Activated B cell treated with CpG ODN at 0.5 μM for 24 hours (primary cell): ENCODE measurements at regions of chr2 and their contacts with region 1.

Region 1: DNA sequence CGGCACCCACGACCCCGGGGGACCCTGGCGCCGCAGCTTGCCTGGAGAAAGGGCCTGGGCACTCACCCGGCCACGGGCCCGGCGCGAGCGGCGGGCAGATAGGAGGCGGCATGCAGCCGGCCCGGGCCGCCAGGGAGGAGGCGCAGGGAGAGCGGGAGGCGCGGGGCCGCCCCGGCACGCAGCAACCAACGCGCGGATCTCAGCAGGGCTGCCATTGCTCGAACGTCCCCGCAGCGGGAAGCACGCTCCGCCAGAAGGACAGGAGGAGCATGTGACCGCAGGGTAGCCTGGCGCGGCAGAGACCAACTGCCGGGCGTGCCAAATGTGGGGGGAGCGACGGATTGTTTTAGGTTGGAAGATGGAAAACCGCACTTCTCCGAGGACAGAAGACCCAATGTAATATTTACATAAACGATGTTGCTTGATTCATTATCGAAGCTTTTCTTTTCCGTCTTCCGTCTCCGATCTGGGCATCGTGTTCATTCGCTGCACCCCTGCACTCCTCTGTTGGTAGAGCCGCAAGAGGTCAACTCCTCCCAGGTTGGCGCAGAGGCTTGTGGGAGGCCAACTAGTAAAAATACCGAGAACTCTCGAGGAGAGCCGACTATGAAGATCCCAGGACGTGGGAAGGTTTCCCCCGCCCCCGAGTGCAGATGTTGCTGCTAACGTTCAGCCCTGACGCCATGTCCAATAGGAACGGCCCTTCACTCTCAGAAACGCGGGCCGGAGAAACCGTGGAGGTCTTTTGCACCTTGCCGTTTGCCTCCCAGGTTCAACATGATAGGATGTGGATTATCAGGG is at the start of gene LRPPRC:
- DNase-seq: peak; percentile 74
- ATAC-seq: peak; percentile 96
- H3K4me3 Mint-ChIP-seq: peak within 1 kb of the TSS; percentile 92
- H3K27ac Mint-ChIP-seq: peak within 1 kb of the TSS; percentile 98
- H3K4me1 Mint-ChIP-seq: peaks cover 49% of the 10 kb centered on the region
- H3K27me3 Mint-ChIP-seq: no peaks in the 10 kb centered on the region
- CTCF ChIP-seq: no peak
- total RNA-seq, gene LRPPRC: 114 and 120 TPM in 2 replicates

Region 2: GRCh38 chr2:42102024-42102590 is 1893.8 kb before region 1 on chr2:
- CTCF ChIA-PET with region 1: no interaction called
- POLR2A ChIA-PET with region 1: no interaction called
- intact Hi-C with region 1: loop called (anchors 10 kb)
- DNase-seq: peak; percentile 88
- ATAC-seq: peak; percentile 72
- H3K4me3 Mint-ChIP-seq: peak overlapping the region; percentile 88
- H3K27ac Mint-ChIP-seq: no peak overlapping the region
- H3K4me1 Mint-ChIP-seq: peaks cover 47% of the 10 kb centered on the region
- H3K27me3 Mint-ChIP-seq: no peaks in the 10 kb centered on the region
- CTCF ChIP-seq: no peak

Region 3: DNA sequence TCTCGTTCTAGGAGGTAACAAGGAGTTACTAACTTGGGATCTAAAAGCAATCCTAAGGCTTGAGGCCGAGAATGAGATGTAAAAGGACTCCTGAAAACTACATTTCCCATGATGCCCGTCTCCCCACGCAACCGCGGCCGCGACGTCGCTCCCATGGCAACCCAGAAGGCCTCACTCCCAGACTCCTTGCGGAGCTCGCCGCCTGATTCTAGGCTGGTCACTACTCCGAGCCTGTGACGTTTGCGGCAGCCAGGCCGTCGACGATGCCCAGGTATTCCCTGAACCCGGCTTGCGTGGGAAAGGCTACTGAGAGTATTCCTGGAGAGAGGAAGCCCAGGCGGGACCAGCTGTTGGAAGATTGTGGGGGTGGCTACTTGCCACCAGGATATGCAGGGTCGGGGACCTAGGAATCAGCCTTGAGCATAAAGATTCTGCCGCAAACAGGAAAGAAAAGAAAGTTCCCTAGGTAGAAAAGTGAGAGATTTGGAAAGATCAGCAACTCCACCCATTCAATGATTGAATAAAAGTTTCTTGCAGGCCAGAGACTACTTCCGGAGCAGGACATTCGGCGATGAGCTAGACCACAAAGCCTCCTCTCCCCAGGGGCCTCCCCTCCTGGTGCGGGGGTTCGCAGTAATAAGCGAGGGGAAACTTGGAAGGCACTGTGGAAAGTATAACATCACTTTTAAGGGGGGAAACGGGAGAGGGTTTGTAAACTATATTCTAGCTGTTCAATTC is 221.9 kb before region 1 on chr2 and contains the start of gene DYNC2LI1:
- CTCF ChIA-PET with region 1: no interaction called
- POLR2A ChIA-PET with region 1: no interaction called
- intact Hi-C with region 1: loop called (anchors 2 kb)
- DNase-seq: peak; percentile 75
- ATAC-seq: peak; percentile 98
- H3K4me3 Mint-ChIP-seq: peak within 1 kb of the TSS; percentile 100
- H3K27ac Mint-ChIP-seq: peak within 1 kb of the TSS; percentile 85
- H3K4me1 Mint-ChIP-seq: peaks cover 12% of the 10 kb centered on the region
- H3K27me3 Mint-ChIP-seq: peaks cover 4% of the 10 kb centered on the region
- CTCF ChIP-seq: no peak
- total RNA-seq, gene DYNC2LI1: 8.9 and 10.4 TPM in 2 replicates

Region 4: DNA sequence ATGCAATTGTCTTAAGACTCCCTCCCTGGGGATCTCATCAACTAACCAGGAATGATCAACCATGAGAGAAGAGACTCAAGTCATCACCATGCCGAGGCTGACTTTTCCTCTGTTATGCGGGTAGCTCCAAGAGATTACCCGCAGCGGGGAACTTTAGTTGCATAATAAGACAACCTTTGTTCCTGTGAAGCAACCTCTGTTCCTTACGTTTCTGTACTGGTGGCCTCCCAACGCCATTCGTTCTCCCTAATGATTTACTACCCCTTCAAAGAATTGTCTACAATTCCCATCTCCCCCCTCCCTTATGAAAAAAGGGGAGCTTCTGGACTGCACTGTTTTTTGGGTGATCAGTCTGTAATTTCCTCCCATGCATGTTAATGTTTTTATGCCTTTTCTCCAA is 65.9 kb after region 1 on chr2:
- CTCF ChIA-PET with region 1: no interaction called
- POLR2A ChIA-PET with region 1: no interaction called
- intact Hi-C with region 1: no loop called
- DNase-seq: no peak
- ATAC-seq: no peak
- H3K4me3 Mint-ChIP-seq: no peak overlapping the region
- H3K27ac Mint-ChIP-seq: no peak overlapping the region
- H3K4me1 Mint-ChIP-seq: no peaks in the 10 kb centered on the region
- H3K27me3 Mint-ChIP-seq: peaks cover 13% of the 10 kb centered on the region
- CTCF ChIP-seq: no peak

Region 5: GRCh38 chr2:44361330-44362206 is 365.6 kb after region 1 on chr2 and contains the starts of genes CAMKMT and PREPL:
- CTCF ChIA-PET with region 1: no interaction called
- POLR2A ChIA-PET with region 1: interaction called, 15 read pairs
- intact Hi-C with region 1: loop called (anchors 1 kb)
- DNase-seq: peak; percentile 96
- ATAC-seq: peak; percentile 83
- H3K4me3 Mint-ChIP-seq: peak within 1 kb of the TSS; percentile 93
- H3K27ac Mint-ChIP-seq: peak within 1 kb of the TSS; percentile 100
- H3K4me1 Mint-ChIP-seq: peaks cover 35% of the 10 kb centered on the region
- H3K27me3 Mint-ChIP-seq: no peaks in the 10 kb centered on the region
- CTCF ChIP-seq: no peak
- total RNA-seq, gene CAMKMT: 17.4 and 21.2 TPM in 2 replicates
- total RNA-seq, gene PREPL: 29.2 and 33.3 TPM in 2 replicates

Region 6: DNA sequence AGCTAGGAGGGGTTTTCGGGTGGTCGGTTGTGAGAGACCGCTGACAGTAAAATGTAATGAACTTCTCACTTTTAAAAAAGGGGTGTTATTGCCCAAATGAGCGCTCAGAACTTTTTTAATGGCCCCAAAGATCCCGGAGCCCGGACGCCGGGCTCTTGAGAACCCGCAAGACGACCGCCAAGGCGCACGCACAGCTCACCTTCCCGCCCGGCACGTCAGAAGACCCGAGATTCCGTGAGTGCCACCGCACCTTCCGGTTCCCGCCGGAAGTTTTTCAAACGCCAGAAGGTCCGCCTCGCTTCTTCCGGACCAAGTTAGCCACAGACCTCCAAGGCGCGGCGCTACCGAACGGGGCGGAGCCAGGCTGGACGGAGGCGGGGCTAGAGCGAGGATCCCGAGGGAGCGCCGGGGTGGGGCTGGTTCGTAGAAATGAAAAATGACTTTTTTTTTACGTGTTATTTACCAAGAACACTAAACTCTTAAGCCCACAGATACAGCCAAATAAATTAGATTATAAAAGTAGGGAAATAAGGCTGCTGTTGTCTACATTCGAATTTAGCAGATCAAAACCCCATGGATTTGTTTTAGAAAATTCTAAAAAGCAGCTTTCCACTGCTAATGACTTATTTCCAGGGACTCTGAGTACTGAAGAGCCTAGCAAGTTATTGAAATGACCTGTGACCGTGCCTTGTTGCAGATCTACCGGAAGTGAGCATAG is 1615.2 kb after region 1 on chr2 and contains the start of gene SRBD1:
- CTCF ChIA-PET with region 1: no interaction called
- POLR2A ChIA-PET with region 1: no interaction called
- intact Hi-C with region 1: loop called (anchors 2 kb)
- DNase-seq: peak; percentile 94
- ATAC-seq: peak; percentile 98
- H3K4me3 Mint-ChIP-seq: peak within 1 kb of the TSS; percentile 96
- H3K27ac Mint-ChIP-seq: peak within 1 kb of the TSS; percentile 95
- H3K4me1 Mint-ChIP-seq: peaks cover 29% of the 10 kb centered on the region
- H3K27me3 Mint-ChIP-seq: no peaks in the 10 kb centered on the region
- CTCF ChIP-seq: no peak
- total RNA-seq, gene SRBD1: 20.2 and 20.8 TPM in 2 replicates